Dorsolateral prefrontal cortex (tissue), 120 donors: ENCODE measurements at regions of chr9 and their contacts with region 1.

Region 1: GRCh38 chr9:132268725-132269352 is 85.9 kb downstream of the SETX start:
- DNase-seq: peak; percentile 61 to 83 (median 74)
- H3K4me3 ChIP-seq: no peak overlapping the region
- H3K27ac ChIP-seq: peak overlapping the region in 24 of 59 donors; percentile 0 to 70 (median 20)
- H3K27me3 ChIP-seq: no peaks in the 10 kb centered on the region
- CTCF ChIP-seq: peak; percentile 81 to 98 (median 92)

Region 2: GRCh38 chr9:131585375-131585774 is 683.5 kb before region 1 on chr9:
- intact Hi-C with region 1: loop called in 1 of 2 experiments (anchors 10 kb)
- DNase-seq: no peak
- H3K4me3 ChIP-seq: no peak overlapping the region
- H3K27ac ChIP-seq: no peak overlapping the region
- H3K27me3 ChIP-seq: no peaks in the 10 kb centered on the region
- CTCF ChIP-seq: no peak

Region 3: DNA sequence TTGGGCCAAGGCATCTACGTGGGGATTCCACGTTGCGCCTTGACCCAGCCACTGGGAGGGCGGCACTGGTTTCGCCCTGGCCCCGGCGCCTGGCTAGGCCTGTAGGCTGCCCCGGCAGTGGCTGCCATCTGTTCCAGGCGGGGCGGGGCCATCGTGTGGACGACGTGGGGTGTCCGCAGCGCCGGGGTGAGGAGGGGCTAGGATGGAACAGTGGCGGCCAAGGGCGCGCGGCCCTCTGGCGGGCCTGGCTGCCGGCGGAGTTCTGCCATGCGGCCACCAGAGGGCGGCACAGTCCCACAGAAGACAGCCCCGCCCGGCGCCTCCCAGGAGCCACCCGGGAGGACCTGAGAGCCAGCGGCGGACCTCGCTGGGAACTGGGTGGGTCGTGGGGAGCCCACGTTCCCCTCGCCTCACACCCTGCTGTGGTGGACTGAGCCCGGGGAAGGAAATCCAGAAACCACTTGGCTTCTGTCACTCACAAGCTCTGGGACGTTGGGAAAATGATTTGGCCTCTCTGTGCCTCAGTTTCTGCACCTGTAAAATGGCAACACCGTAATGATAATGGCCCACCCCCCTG is 506.4 kb before region 1 on chr9:
- intact Hi-C with region 1: loop called in 1 of 2 experiments (anchors 5 kb)
- DNase-seq: peak; percentile 57 to 87 (median 68)
- H3K4me3 ChIP-seq: peak overlapping the region in 37 of 59 donors; percentile 4 to 52 (median 30)
- H3K27ac ChIP-seq: no peak overlapping the region
- H3K27me3 ChIP-seq: no peaks in the 10 kb centered on the region
- CTCF ChIP-seq: peak; percentile 79 to 100 (median 98)